ENCODE measurements at regions of chr13 and their contacts with region 1.

Region 1: GRCh38 chr13:44306401-44307192 is 67.0 kb upstream of the SERP2 start:
- DNase-seq: peak; percentile 99
- H3K4me3 ChIP-seq: peak overlapping the region in 1 of 3 experiments; percentile 50
- H3K27ac ChIP-seq: peak overlapping the region; percentile 100
- H3K4me1 ChIP-seq: peaks cover 23% of the 10 kb centered on the region
- H3K27me3 ChIP-seq: no peaks in the 10 kb centered on the region
- CTCF ChIP-seq: no peak
- POLR2A ChIP-seq: no peak

Region 2: DNA sequence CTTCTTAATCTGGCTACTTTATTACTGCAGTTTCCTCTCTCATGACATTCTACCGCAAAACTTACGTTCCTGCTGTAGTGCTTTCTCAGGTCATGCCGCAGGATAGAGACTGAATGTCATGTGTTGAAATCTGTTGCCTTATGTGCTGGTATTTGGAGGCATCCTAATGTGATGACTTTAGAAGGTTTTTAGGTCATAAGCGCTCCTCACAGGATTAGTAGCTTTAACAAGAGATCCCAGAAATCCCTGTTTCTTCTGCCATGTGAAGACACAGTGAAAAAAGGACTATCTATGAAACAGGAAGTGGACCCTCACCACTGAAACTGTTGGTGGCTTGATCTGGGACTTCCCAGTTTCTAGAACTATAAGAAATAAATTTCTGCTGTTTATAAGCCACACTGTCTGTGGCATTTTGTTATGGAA is 217.6 kb before region 1 on chr13:
- CTCF ChIA-PET with region 1: no interaction called
- POLR2A ChIA-PET with region 1: no interaction called
- dilution Hi-C with region 1: no loop called
- intact Hi-C with region 1: no loop called
- DNase-seq: no peak
- H3K4me3 ChIP-seq: no peak overlapping the region
- H3K27ac ChIP-seq: no peak overlapping the region
- H3K4me1 ChIP-seq: no peaks in the 10 kb centered on the region
- H3K27me3 ChIP-seq: peaks cover 0 to 9% of the 10 kb centered on the region in 2 experiments
- CTCF ChIP-seq: no peak
- POLR2A ChIP-seq: no peak

Region 3: DNA sequence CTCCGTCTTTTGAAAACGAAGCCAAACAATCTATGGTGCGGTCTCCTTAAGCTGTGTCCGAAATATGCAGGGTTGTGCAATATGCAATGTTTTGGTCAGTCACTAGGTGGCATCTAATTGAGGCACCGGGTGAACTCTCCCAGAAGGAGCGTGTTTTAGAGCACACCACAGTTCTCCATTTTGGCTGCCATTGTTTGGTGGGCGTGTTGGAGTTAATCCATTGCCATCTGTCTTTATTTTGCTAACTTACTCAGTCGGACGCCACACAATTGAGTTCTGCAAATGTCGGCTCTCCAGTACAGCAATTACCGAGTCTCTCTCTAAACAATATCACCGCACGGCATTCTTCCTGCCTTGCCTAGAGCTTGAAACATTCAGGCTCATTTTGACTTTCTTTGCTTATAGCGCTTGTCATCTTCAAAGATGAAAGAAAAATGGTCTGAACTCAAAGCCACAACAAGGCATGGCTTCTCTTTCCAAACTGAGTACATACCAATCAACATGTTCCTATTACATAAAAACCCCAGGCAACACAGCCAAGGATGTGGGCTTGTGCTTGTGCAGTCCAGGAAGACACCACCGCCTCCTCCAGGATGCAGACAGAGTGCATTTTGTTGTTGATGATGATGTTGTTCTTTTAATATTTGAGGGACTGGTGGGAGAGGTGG is 115.0 kb before region 1 on chr13:
- CTCF ChIA-PET with region 1: interaction called, 14 read pairs
- POLR2A ChIA-PET with region 1: no interaction called
- dilution Hi-C with region 1: no loop called
- intact Hi-C with region 1: loop called (anchors 1 kb)
- DNase-seq: peak; percentile 71
- H3K4me3 ChIP-seq: no peak overlapping the region
- H3K27ac ChIP-seq: no peak overlapping the region
- H3K4me1 ChIP-seq: no peaks in the 10 kb centered on the region
- H3K27me3 ChIP-seq: no peaks in the 10 kb centered on the region
- CTCF ChIP-seq: peak; percentile 46 to 71
- POLR2A ChIP-seq: no peak

Region 4: GRCh38 chr13:44243198-44243857 is 63.3 kb before region 1 on chr13:
- CTCF ChIA-PET with region 1: interaction called, 16 read pairs
- POLR2A ChIA-PET with region 1: no interaction called
- dilution Hi-C with region 1: no loop called
- intact Hi-C with region 1: loop called (anchors 1 kb)
- DNase-seq: peak; percentile 92
- H3K4me3 ChIP-seq: no peak overlapping the region
- H3K27ac ChIP-seq: peak overlapping the region; percentile 69
- H3K4me1 ChIP-seq: peaks cover 11% of the 10 kb centered on the region
- H3K27me3 ChIP-seq: no peaks in the 10 kb centered on the region
- CTCF ChIP-seq: peak; percentile 53 to 73
- POLR2A ChIP-seq: no peak

Region 5: DNA sequence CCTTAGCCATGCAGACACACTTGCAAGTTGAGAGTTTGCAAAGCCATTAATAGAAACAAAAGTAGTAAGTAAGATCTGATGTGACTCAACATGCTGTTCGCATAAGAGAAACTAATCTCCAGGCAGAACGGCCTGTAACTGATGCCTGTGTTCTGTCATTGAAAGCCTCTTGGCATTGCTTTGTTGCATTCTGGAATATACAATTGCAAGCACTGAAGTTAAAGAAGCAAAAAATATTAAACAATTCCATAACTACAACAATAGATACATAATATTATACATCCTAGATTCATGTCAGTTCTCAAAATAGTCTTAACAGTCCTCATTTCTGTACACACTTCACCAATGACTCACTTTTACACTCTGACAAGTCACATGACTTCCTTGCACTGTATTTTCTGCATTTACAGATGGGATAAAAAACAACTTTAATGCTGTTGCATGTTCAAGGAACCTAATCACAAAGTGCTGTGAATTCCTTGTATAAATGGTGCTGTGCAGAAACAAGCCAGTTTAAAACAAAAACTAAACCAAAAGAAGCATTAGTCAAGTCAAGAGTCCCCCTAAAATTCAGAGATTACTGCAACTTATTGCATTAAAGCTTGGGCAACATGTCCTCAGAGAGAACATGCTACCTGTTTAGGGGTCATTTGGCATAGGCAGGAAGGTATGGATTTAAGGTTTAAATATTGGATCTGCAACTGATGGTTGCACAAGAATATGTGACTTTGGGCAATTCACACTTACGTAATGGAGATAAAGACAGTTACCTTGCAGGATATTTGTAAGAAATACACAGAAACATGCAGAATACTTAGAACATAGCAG is 12.5 kb before region 1 on chr13:
- CTCF ChIA-PET with region 1: interaction called, 3 read pairs
- POLR2A ChIA-PET with region 1: no interaction called
- dilution Hi-C with region 1: no loop called
- intact Hi-C with region 1: loop called (anchors 1 kb)
- DNase-seq: peak; percentile 75
- H3K4me3 ChIP-seq: no peak overlapping the region
- H3K27ac ChIP-seq: no peak overlapping the region
- H3K4me1 ChIP-seq: peaks cover 10% of the 10 kb centered on the region
- H3K27me3 ChIP-seq: peaks cover 4 to 8% of the 10 kb centered on the region in 2 experiments
- CTCF ChIP-seq: no peak
- POLR2A ChIP-seq: no peak

Region 6: GRCh38 chr13:44667943-44668342 is 361.3 kb after region 1 on chr13:
- CTCF ChIA-PET with region 1: no interaction called
- POLR2A ChIA-PET with region 1: no interaction called
- dilution Hi-C with region 1: no loop called
- intact Hi-C with region 1: no loop called
- DNase-seq: peak; percentile 44
- H3K4me3 ChIP-seq: no peak overlapping the region
- H3K27ac ChIP-seq: no peak overlapping the region
- H3K4me1 ChIP-seq: peaks cover 13% of the 10 kb centered on the region
- H3K27me3 ChIP-seq: no peaks in the 10 kb centered on the region
- CTCF ChIP-seq: no peak
- POLR2A ChIP-seq: no peak